Caco-2 (cell line): ENCODE measurements at regions of chr4 and their contacts with region 1.

Region 1: GRCh38 chr4:170374770-170375169 is 285.0 kb upstream of the AADAT start:
- DNase-seq: peak in 1 of 2 experiments; percentile 44
- H3K4me3 ChIP-seq: no peak overlapping the region
- H3K4me3 Mint-ChIP-seq: no peak overlapping the region
- H3K27ac Mint-ChIP-seq: no peak overlapping the region
- H3K4me1 ChIP-seq: no peaks in the 10 kb centered on the region
- H3K4me1 Mint-ChIP-seq: no peaks in the 10 kb centered on the region
- H3K27me3 ChIP-seq: no peaks in the 10 kb centered on the region
- H3K27me3 Mint-ChIP-seq: no peaks in the 10 kb centered on the region
- CTCF ChIP-seq: peak; percentile 47 to 58

Region 2: DNA sequence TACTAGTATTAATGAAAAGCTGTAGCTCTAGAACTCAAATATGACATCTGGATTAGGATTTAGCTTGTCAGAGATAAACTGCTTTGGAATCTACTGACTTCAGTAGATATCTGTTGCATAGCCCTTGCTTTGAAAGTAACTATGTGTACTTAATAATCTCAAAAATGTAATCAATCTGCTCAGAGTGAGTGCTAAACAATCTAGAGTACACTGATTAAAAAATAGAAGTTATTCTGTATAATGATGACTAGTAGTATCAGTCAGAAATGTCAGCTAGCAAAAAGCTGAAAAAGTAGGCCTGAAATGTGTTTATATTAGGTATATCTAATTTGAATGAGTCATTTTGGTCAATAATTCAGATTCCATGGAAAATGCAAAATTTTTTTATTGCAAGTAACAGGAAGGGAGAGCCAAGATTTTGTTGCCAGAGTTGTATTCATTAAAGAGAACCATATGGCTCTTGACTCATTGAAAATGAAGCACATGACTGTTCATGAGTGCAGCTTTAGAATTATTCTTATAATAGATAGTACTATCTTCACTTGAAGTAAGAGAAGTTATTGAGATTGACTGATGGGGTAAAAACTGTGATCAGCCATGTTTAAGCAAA is 734.4 kb before region 1 on chr4:
- CTCF ChIA-PET with region 1: no interaction called
- POLR2A ChIA-PET with region 1: no interaction called
- intact Hi-C with region 1: no loop called
- DNase-seq: no peak
- H3K4me3 ChIP-seq: no peak overlapping the region
- H3K4me3 Mint-ChIP-seq: no peak overlapping the region
- H3K27ac Mint-ChIP-seq: no peak overlapping the region
- H3K4me1 ChIP-seq: peaks cover 12% of the 10 kb centered on the region
- H3K4me1 Mint-ChIP-seq: peaks cover under 1% of the 10 kb centered on the region
- H3K27me3 ChIP-seq: no peaks in the 10 kb centered on the region
- H3K27me3 Mint-ChIP-seq: no peaks in the 10 kb centered on the region
- CTCF ChIP-seq: no peak

Region 3: DNA sequence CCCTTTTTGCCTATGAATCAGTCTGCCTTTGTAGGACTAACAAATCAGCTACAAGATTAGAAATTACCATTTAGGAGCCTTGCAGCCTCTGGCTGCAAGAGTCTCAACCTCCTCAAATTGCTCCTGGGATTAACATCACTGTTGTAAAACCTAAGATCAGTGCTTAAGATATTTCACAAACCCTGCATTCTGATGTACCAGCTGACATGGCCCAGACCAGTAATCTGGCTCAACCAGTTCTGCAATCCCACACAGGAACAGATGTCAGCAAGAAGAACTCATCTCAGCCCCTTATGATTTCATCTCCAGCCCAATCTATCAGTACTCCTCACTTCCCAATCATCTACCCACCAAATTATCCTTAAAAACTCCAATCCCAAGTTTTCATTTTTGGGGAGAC is 252.5 kb before region 1 on chr4:
- CTCF ChIA-PET with region 1: no interaction called
- POLR2A ChIA-PET with region 1: no interaction called
- intact Hi-C with region 1: no loop called
- DNase-seq: peak; percentile 51 to 59
- H3K4me3 ChIP-seq: no peak overlapping the region
- H3K4me3 Mint-ChIP-seq: no peak overlapping the region
- H3K27ac Mint-ChIP-seq: no peak overlapping the region
- H3K4me1 ChIP-seq: no peaks in the 10 kb centered on the region; the same call in 1 of the 2 replicates
- H3K4me1 Mint-ChIP-seq: peaks cover 9% of the 10 kb centered on the region
- H3K27me3 ChIP-seq: no peaks in the 10 kb centered on the region
- H3K27me3 Mint-ChIP-seq: peaks cover 5% of the 10 kb centered on the region
- CTCF ChIP-seq: no peak

Region 4: DNA sequence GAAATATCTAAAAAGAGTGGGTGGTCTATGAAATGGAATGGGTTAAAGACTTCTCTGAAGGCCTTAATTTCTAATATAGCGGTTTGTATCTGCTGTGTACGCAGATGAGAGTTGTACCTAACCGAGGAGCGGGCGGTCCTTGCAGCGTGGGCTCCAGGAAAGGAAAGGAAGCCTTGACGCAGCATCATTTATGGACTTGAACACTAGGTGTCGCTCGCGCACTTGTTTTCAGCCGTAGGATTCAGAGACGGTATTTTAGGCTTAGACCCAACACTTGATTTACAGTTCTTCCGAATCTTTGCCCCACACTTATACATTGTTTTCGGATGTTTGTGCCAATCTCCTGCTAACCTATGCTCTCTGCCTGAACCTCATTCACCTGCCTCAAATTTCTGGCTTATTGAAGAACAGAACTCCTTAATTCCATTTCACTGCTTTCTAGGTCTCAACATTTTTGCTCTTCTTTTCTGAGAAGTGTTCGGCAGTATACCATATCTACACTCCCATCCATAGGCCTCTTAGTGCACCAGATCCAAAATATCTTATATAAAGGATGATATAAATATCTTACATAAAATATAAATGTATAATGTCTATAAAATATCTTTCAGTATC is 236.1 kb before region 1 on chr4:
- CTCF ChIA-PET with region 1: no interaction called
- POLR2A ChIA-PET with region 1: no interaction called
- intact Hi-C with region 1: loop called (anchors 1 kb)
- DNase-seq: peak; percentile 69 to 74
- H3K4me3 ChIP-seq: no peak overlapping the region
- H3K4me3 Mint-ChIP-seq: no peak overlapping the region
- H3K27ac Mint-ChIP-seq: no peak overlapping the region
- H3K4me1 ChIP-seq: no peaks in the 10 kb centered on the region
- H3K4me1 Mint-ChIP-seq: peaks cover 6% of the 10 kb centered on the region
- H3K27me3 ChIP-seq: no peaks in the 10 kb centered on the region
- H3K27me3 Mint-ChIP-seq: peaks cover 6% of the 10 kb centered on the region
- CTCF ChIP-seq: peak; percentile 68 to 75

Region 5: GRCh38 chr4:170198747-170199146 is 176.0 kb before region 1 on chr4:
- CTCF ChIA-PET with region 1: interaction called, 3 read pairs
- POLR2A ChIA-PET with region 1: no interaction called
- intact Hi-C with region 1: loop called (anchors 2 kb)
- DNase-seq: no peak
- H3K4me3 ChIP-seq: no peak overlapping the region
- H3K4me3 Mint-ChIP-seq: no peak overlapping the region
- H3K27ac Mint-ChIP-seq: no peak overlapping the region
- H3K4me1 ChIP-seq: no peaks in the 10 kb centered on the region
- H3K4me1 Mint-ChIP-seq: no peaks in the 10 kb centered on the region
- H3K27me3 ChIP-seq: no peaks in the 10 kb centered on the region
- H3K27me3 Mint-ChIP-seq: no peaks in the 10 kb centered on the region
- CTCF ChIP-seq: no peak

Region 6: GRCh38 chr4:170581322-170581721 is 206.6 kb after region 1 on chr4:
- CTCF ChIA-PET with region 1: no interaction called
- POLR2A ChIA-PET with region 1: no interaction called
- intact Hi-C with region 1: no loop called
- DNase-seq: no peak
- H3K4me3 ChIP-seq: no peak overlapping the region
- H3K4me3 Mint-ChIP-seq: no peak overlapping the region
- H3K27ac Mint-ChIP-seq: no peak overlapping the region
- H3K4me1 ChIP-seq: no peaks in the 10 kb centered on the region
- H3K4me1 Mint-ChIP-seq: no peaks in the 10 kb centered on the region
- H3K27me3 ChIP-seq: no peaks in the 10 kb centered on the region
- H3K27me3 Mint-ChIP-seq: peaks cover 2% of the 10 kb centered on the region
- CTCF ChIP-seq: no peak